Transverse colon (tissue), 4 donors: ENCODE measurements at regions of chr12 and their contacts with region 1.

Region 1: GRCh38 chr12:32947206-32948067 is 50.9 kb upstream of the PKP2 start:
- DNase-seq: no peak
- H3K4me3 ChIP-seq: no peak overlapping the region
- H3K27ac ChIP-seq: no peak overlapping the region
- H3K4me1 ChIP-seq: no peaks in the 10 kb centered on the region
- H3K27me3 ChIP-seq: no peaks in the 10 kb centered on the region
- CTCF ChIP-seq: peak in 1 of 5 experiments; percentile 12
- EP300 ChIP-seq: no peak
- POLR2A ChIP-seq: no peak

Region 2: GRCh38 chr12:32877601-32878459 is 69.6 kb before region 1 on chr12:
- in situ Hi-C with region 1: no loop called
- intact Hi-C with region 1: no loop called
- DNase-seq: no peak
- H3K4me3 ChIP-seq: no peak overlapping the region
- H3K27ac ChIP-seq: no peak overlapping the region
- H3K4me1 ChIP-seq: peaks cover 0 to 42% (median 27%) of the 10 kb centered on the region in 4 donors
- H3K27me3 ChIP-seq: no peaks in the 10 kb centered on the region
- CTCF ChIP-seq: no peak
- EP300 ChIP-seq: no peak
- POLR2A ChIP-seq: no peak

Region 3: DNA sequence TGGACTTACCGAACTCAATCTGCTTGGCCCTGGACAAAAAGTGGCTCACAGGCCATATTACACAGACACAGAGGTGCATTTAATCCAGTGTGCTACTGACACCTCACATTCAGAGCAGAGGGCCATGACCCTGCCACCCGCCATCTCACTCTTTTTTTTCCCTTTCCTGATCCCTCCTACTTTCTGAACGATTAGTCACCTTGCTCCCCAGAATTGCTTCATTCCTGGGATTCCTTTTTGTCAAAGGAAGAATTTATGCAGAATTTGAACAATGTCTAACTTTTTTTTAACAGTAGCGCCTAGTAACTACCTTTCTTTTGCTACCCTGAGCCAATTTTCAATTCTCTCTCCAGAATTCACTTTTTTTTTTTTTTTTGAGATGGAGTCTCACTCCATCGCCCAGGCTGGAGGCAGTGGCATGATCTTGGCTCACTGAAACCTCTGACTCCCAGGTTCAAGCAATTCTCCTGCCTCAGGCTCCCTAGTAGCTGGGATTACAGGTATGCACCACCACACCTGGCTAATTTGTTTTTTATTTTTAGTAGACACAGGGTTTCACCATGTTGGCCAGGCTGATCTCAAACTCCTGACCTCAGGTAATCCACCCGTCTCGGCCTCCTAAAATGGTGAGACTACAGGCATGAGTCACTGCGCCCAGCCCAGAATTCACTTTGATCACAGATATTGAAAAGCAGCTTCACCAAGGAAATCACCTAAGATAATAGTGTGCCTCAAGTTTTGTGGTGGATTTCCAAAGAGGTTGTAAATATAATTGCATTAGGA is 55.3 kb before region 1 on chr12:
- in situ Hi-C with region 1: no loop called
- intact Hi-C with region 1: no loop called
- DNase-seq: no peak
- H3K4me3 ChIP-seq: no peak overlapping the region
- H3K27ac ChIP-seq: peak overlapping the region in 2 of 4 donors; percentile 29 to 39
- H3K4me1 ChIP-seq: peaks cover 0 to 37% (median 9%) of the 10 kb centered on the region in 4 donors
- H3K27me3 ChIP-seq: peaks cover 24% of the 10 kb centered on the region
- CTCF ChIP-seq: no peak
- EP300 ChIP-seq: no peak
- POLR2A ChIP-seq: no peak

Region 4: DNA sequence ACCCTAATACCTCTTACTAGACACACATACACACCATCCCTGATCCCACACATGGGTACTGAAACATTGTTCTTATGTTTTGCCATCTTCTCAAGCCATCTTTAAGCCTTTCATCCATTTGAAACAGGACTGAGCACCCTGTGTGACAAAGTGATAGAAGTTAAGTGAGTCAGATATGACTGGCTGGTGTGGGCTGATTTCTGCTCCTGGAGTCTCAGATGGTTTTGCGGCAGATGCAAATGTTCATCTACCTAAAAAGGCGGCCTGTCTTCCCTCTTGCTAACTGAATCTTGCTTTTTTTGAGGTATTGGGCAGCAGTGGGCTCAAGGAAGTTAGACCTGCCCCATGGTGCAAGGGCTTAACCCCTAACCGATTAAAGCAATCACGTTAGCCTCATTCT is 20.5 kb before region 1 on chr12:
- in situ Hi-C with region 1: no loop called
- intact Hi-C with region 1: no loop called
- DNase-seq: no peak
- H3K4me3 ChIP-seq: no peak overlapping the region
- H3K27ac ChIP-seq: no peak overlapping the region
- H3K4me1 ChIP-seq: no peaks in the 10 kb centered on the region
- H3K27me3 ChIP-seq: no peaks in the 10 kb centered on the region
- CTCF ChIP-seq: no peak
- EP300 ChIP-seq: no peak
- POLR2A ChIP-seq: no peak

Region 5: GRCh38 chr12:33734871-33735270 is 787.4 kb after region 1 on chr12:
- in situ Hi-C with region 1: no loop called
- intact Hi-C with region 1: no loop called
- DNase-seq: no peak
- H3K4me3 ChIP-seq: no peak overlapping the region
- H3K27ac ChIP-seq: no peak overlapping the region
- H3K4me1 ChIP-seq: no peaks in the 10 kb centered on the region
- H3K27me3 ChIP-seq: no peaks in the 10 kb centered on the region
- CTCF ChIP-seq: no peak
- EP300 ChIP-seq: no peak
- POLR2A ChIP-seq: no peak

Region 6: DNA sequence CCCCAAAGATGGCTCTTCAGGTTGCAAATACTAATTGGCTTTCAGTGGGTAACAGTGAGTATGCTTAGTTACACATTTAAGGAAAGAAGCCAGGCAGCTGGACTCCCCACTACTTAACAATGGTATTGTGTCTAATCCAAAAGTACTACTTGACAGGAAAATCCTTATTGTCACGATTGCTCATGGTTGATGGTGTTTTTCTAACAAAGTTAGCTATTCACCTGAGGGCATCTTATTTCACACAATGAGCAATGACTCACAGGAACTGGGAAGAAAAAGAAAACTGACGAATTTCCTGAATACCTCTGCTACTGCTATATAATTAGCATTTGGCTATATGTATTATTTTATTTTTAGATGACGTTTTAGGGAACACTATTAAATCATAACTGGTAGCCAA is 1041.5 kb after region 1 on chr12:
- in situ Hi-C with region 1: loop called in 1 of 4 experiments (anchors 25 kb)
- intact Hi-C with region 1: no loop called
- DNase-seq: no peak
- H3K4me3 ChIP-seq: no peak overlapping the region
- H3K27ac ChIP-seq: no peak overlapping the region
- H3K4me1 ChIP-seq: no peaks in the 10 kb centered on the region
- H3K27me3 ChIP-seq: no peaks in the 10 kb centered on the region
- CTCF ChIP-seq: no peak
- EP300 ChIP-seq: no peak
- POLR2A ChIP-seq: no peak

Region 7: DNA sequence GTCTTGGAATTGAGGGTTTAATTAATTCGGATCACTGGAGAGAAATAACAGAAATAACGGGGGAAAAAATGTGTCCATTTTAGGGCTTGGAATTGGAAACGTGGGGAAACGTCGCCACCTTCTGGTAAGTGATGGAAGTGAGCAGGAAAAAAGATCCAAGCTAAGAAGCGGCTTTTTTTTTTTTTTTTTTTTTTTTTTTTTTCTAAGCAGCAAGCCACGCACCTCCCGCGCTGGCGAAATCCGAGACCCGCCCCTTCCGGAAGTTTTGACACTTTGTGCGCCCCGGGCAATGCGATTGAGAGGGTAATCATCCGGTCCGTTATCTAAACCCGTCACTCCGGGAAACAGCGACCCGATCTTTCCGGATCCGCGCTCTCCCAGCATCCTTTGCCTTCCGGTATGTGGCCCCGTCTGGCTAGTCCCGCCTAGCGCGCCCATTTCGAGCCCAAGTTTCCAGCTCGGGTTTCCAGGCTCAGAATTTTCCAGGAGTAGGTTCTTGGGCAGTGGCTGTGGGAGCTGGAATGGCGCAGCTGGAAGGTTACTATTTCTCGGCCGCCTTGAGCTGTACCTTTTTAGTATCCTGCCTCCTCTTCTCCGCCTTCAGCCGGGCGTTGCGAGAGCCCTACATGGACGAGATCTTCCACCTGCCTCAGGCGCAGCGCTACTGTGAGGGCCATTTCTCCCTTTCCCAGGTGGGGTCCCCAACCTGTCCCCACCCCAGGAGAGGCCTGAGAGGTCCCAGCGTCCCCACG is 1074.8 kb after region 1 on chr12 and contains the start of gene ALG10:
- in situ Hi-C with region 1: loop called in 2 of 4 experiments (anchors 25 kb)
- intact Hi-C with region 1: no loop called
- DNase-seq: peak; percentile 97
- H3K4me3 ChIP-seq: peak within 1 kb of the TSS; percentile 52 to 80 (median 68)
- H3K27ac ChIP-seq: peak within 1 kb of the TSS; percentile 85 to 91 (median 87)
- H3K4me1 ChIP-seq: peaks cover 3 to 15% (median 9%) of the 10 kb centered on the region in 4 donors
- H3K27me3 ChIP-seq: no peaks in the 10 kb centered on the region
- CTCF ChIP-seq: peak; percentile 71 to 90 (median 78)
- EP300 ChIP-seq: no peak
- POLR2A ChIP-seq: peak; percentile 32
- total RNA-seq, gene ALG10: 1.1 to 77.6 (median 7.8) TPM